Gastrocnemius medialis (tissue), 4 donors: ENCODE measurements at regions of chr5 and their contacts with region 1.

Region 1: GRCh38 chr5:138213161-138214029 is at the start of gene CDC23:
- DNase-seq: peak; percentile 94 to 95
- ATAC-seq: peak; percentile 100
- H3K4me3 ChIP-seq: peak within 1 kb of the TSS; percentile 69 to 99 (median 95)
- H3K27ac ChIP-seq: peak within 1 kb of the TSS; percentile 81 to 93 (median 86)
- H3K4me1 ChIP-seq: peaks cover 21 to 26% of the 10 kb centered on the region in 2 donors
- H3K27me3 ChIP-seq: no peaks in the 10 kb centered on the region
- CTCF ChIP-seq: no peak
- POLR2A ChIP-seq: peak; percentile 56 to 65
- total RNA-seq, gene CDC23: 7.7 to 11.7 (median 10.4) TPM

Region 2: GRCh38 chr5:138128334-138128733 is 85.1 kb before region 1 on chr5:
- in situ Hi-C with region 1: no loop called
- intact Hi-C with region 1: no loop called
- DNase-seq: no peak
- ATAC-seq: no peak
- H3K4me3 ChIP-seq: no peak overlapping the region
- H3K27ac ChIP-seq: no peak overlapping the region
- H3K4me1 ChIP-seq: no peaks in the 10 kb centered on the region
- H3K27me3 ChIP-seq: no peaks in the 10 kb centered on the region
- CTCF ChIP-seq: no peak
- POLR2A ChIP-seq: no peak

Region 3: GRCh38 chr5:138178516-138179276 is 34.7 kb before region 1 on chr5 and contains the starts of genes BRD8 and KIF20A:
- in situ Hi-C with region 1: no loop called
- intact Hi-C with region 1: loop called (anchors 2 kb)
- DNase-seq: peak; percentile 95 to 98
- ATAC-seq: peak; percentile 99
- H3K4me3 ChIP-seq: peak within 1 kb of the TSS; percentile 80 to 95 (median 92)
- H3K27ac ChIP-seq: peak within 1 kb of the TSS; percentile 88 to 96 (median 95)
- H3K4me1 ChIP-seq: peaks cover 17 to 19% of the 10 kb centered on the region in 2 donors
- H3K27me3 ChIP-seq: no peaks in the 10 kb centered on the region
- CTCF ChIP-seq: no peak
- POLR2A ChIP-seq: peak in 1 of 2 donors; percentile 48
- total RNA-seq, gene BRD8: 20.2 to 28.0 (median 24.1) TPM
- total RNA-seq, gene KIF20A: 0.75 to 0.89 TPM in 2 of 4 donors, not detected in the others

Region 4: GRCh38 chr5:138192826-138193225 is 20.6 kb before region 1 on chr5:
- in situ Hi-C with region 1: no loop called
- intact Hi-C with region 1: no loop called
- DNase-seq: no peak
- ATAC-seq: no peak
- H3K4me3 ChIP-seq: no peak overlapping the region
- H3K27ac ChIP-seq: no peak overlapping the region
- H3K4me1 ChIP-seq: no peaks in the 10 kb centered on the region
- H3K27me3 ChIP-seq: no peaks in the 10 kb centered on the region
- CTCF ChIP-seq: no peak
- POLR2A ChIP-seq: no peak

Region 5: GRCh38 chr5:138331449-138332368 is 118.3 kb after region 1 on chr5 and contains the start of gene CDC25C:
- in situ Hi-C with region 1: loop called in 1 of 4 experiments (anchors 10 kb)
- intact Hi-C with region 1: loop called (anchors 5 kb)
- DNase-seq: peak; percentile 98 to 99
- ATAC-seq: peak; percentile 99 to 100
- H3K4me3 ChIP-seq: peak within 1 kb of the TSS; percentile 57 to 70 (median 60)
- H3K27ac ChIP-seq: peak within 1 kb of the TSS; percentile 38 to 63 (median 58)
- H3K4me1 ChIP-seq: peaks cover 10 to 13% of the 10 kb centered on the region in 2 donors
- H3K27me3 ChIP-seq: no peaks in the 10 kb centered on the region
- CTCF ChIP-seq: no peak
- POLR2A ChIP-seq: no peak
- total RNA-seq, gene CDC25C: not detected

Region 6: DNA sequence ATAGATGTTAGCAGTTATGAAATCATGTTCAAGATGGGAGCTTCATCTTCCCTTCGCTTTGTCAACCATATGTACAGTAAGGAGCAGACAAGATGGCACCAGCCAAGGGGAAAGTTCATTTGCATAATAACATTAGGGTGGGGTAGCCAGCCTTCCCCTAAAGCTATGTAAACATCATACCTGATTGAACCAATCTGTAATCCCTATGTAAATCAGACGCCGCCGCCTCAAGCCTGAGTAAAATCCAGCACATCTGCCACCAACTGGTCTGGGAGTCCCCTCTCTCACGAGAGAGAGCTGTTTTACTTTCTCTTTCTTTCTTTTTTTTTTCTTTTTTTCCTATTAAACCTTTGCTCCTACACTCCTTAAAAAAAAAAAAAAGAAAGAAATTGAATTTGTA is 194.6 kb after region 1 on chr5:
- in situ Hi-C with region 1: loop called in 1 of 4 experiments (anchors 25 kb)
- intact Hi-C with region 1: no loop called
- DNase-seq: no peak
- ATAC-seq: no peak
- H3K4me3 ChIP-seq: no peak overlapping the region
- H3K27ac ChIP-seq: no peak overlapping the region
- H3K4me1 ChIP-seq: no peaks in the 10 kb centered on the region
- H3K27me3 ChIP-seq: no peaks in the 10 kb centered on the region
- CTCF ChIP-seq: no peak
- POLR2A ChIP-seq: no peak